ENCODE measurements at regions of chr10 and their contacts with region 1.

Region 1: GRCh38 chr10:69636707-69637605 is 6.9 kb downstream of the FAM241B start:
- DNase-seq: peak; percentile 53
- H3K4me3 Mint-ChIP-seq: no peak overlapping the region
- H3K27ac Mint-ChIP-seq: no peak overlapping the region
- H3K4me1 Mint-ChIP-seq: no peaks in the 10 kb centered on the region
- H3K27me3 Mint-ChIP-seq: no peaks in the 10 kb centered on the region

Region 2: DNA sequence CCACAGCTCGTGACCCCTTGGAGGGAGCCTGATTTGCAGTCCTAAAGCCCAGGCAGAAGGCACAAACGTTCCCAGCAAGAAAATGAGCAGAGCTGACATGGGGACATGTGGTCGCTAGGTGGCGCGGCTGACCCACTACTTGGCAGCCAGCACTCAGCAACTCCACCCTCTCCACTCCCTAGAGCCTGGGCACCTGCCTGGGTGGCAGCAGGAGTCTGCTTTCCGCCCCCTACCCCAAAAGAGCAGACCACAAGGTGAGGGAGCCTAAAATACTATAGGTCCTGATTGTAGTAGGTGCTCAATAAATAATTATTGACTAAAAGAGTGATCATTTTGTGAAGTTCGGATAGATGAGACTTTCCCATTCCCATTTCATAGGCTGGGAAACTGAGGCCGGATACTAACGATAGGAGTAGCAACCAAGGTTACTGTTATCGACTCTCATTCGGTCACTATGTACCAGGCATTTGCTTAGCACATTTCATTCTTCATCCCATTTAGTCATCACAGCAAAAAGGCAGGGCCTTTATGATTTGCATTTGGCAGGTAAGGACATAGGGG is 121.2 kb before region 1 on chr10:
- CTCF ChIA-PET with region 1: interaction called, 39 read pairs
- POLR2A ChIA-PET with region 1: interaction called, 3 read pairs
- DNase-seq: peak; percentile 83
- H3K4me3 Mint-ChIP-seq: no peak overlapping the region
- H3K27ac Mint-ChIP-seq: no peak overlapping the region
- H3K4me1 Mint-ChIP-seq: no peaks in the 10 kb centered on the region
- H3K27me3 Mint-ChIP-seq: peaks cover 34% of the 10 kb centered on the region

Region 3: DNA sequence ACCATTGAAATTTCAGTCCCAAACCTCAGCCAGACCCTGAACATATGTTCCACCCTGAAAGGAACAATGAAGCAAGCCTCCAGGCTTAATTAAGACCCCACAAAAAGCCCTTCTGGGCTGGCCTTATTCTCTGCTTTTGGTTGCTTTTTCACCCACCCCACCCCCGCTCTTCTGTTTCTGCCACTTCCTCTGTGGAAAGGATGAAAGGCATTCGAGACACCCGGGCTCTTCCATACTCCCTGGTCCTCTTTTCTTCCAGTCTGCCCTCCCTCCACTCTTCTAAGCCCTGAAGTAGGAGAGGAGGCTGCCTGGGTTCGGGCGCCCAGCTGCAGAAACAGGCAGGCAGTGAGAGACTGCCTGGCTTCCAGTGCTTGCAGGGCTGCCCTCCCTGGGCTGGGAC is 16.3 kb before region 1 on chr10:
- CTCF ChIA-PET with region 1: no interaction called
- POLR2A ChIA-PET with region 1: no interaction called
- DNase-seq: no peak
- H3K4me3 Mint-ChIP-seq: no peak overlapping the region
- H3K27ac Mint-ChIP-seq: no peak overlapping the region
- H3K4me1 Mint-ChIP-seq: peaks cover 32% of the 10 kb centered on the region
- H3K27me3 Mint-ChIP-seq: no peaks in the 10 kb centered on the region

Region 4: GRCh38 chr10:69721690-69722310 is 84.8 kb after region 1 on chr10:
- CTCF ChIA-PET with region 1: no interaction called
- POLR2A ChIA-PET with region 1: no interaction called
- DNase-seq: no peak
- H3K4me3 Mint-ChIP-seq: no peak overlapping the region
- H3K27ac Mint-ChIP-seq: no peak overlapping the region
- H3K4me1 Mint-ChIP-seq: no peaks in the 10 kb centered on the region
- H3K27me3 Mint-ChIP-seq: peaks cover 11% of the 10 kb centered on the region

Region 5: GRCh38 chr10:69742928-69743602 is 106.1 kb after region 1 on chr10:
- CTCF ChIA-PET with region 1: no interaction called
- POLR2A ChIA-PET with region 1: no interaction called
- DNase-seq: no peak
- H3K4me3 Mint-ChIP-seq: no peak overlapping the region
- H3K27ac Mint-ChIP-seq: no peak overlapping the region
- H3K4me1 Mint-ChIP-seq: no peaks in the 10 kb centered on the region
- H3K27me3 Mint-ChIP-seq: peaks cover 24% of the 10 kb centered on the region

Region 6: DNA sequence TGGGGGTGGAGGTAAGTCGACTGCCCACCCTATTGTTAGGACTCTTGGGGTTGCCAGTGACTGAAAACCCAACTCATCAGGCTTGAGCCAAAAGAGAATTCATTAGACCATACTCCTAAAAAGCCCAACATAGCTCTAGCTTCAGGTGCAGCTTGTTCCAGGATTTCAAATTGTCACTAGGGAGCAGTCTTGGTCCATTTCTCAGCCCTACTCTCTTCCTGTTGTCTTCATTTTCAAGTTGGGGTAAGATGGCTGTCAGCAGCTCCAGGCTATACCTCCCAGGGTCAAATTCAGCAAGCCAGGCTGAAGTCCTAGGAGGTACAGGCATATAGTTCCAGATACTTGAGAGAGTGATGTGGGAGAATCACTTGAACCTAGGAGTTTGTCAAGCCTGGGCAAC is 149.8 kb after region 1 on chr10:
- CTCF ChIA-PET with region 1: no interaction called
- POLR2A ChIA-PET with region 1: no interaction called
- DNase-seq: peak; percentile 15
- H3K4me3 Mint-ChIP-seq: no peak overlapping the region
- H3K27ac Mint-ChIP-seq: no peak overlapping the region
- H3K4me1 Mint-ChIP-seq: no peaks in the 10 kb centered on the region
- H3K27me3 Mint-ChIP-seq: peaks cover 17% of the 10 kb centered on the region